ENCODE measurements at regions of chr1 and their contacts with region 1.

Region 1: DNA sequence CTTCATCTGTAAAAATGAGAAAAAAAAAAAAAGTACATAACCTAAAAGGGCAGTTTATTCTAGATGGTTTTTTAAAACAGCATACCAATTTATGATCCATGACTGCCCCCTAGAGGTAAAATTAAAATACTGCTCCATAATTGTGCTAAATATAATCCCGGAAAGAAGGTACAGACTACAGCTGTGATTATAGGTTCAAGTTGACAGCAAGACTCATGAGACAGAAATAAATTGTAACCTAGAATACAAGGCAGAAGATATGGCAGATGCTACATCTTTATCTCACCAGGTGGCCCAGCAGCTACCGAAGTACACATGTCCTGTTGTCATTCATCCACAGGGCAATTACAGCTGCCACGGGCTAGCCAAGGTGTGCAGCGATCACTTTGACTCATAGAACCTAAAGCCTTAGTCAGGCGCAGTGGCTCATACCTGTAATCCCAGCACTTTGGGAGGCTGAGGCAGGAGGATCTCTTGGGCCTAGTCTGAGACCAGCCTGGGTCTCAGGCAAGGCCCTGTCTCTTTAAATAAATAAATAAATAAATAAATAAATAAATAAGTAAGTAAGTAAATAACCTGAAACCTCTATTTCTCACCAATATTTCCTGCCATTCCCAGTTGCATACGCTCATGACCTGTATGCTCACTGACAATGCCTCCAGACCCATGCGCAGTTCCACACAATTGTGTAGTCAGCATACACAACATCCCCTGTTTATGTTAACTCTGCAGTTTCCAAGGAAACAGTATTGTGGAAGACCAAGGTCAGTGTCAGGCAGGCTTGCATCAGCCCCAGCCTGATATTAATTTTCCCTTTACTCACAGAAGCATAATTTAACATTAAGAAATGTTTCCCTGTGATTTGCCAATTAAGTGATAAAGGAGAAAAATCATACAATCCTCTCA is 18.3 kb upstream of the PPIE start:
- DNase-seq: no peak
- H3K4me3 Mint-ChIP-seq: no peak overlapping the region
- H3K27ac Mint-ChIP-seq: no peak overlapping the region
- H3K4me1 Mint-ChIP-seq: no peaks in the 10 kb centered on the region
- H3K27me3 Mint-ChIP-seq: peaks cover 55% of the 10 kb centered on the region

Region 2: GRCh38 chr1:39538588-39539465 is 181.5 kb before region 1 on chr1:
- intact Hi-C with region 1: no loop called
- DNase-seq: peak; percentile 24
- H3K4me3 Mint-ChIP-seq: no peak overlapping the region
- H3K27ac Mint-ChIP-seq: no peak overlapping the region
- H3K4me1 Mint-ChIP-seq: peaks cover 7% of the 10 kb centered on the region
- H3K27me3 Mint-ChIP-seq: no peaks in the 10 kb centered on the region

Region 3: DNA sequence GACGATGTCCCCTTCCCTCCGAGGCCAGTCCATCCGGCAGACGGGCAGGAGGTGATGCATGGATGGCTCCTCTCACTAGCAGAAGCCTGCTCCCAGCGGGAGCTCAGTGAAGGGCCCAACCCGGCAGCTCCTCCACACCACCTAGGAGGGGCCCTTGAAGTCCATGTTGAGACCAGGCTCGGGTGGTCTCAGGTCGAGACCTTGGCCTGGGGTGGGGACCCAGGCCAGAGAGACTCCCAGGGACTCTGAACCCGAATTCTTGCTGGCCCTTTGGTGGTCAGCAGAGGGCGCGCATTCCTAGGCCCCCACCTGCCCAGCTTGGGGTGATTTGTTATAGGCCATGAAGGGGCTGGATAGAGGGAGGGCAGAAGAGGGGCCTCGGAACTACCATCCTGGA is 47.8 kb before region 1 on chr1:
- intact Hi-C with region 1: loop called (anchors 1 kb)
- DNase-seq: no peak
- H3K4me3 Mint-ChIP-seq: peak overlapping the region; percentile 76
- H3K27ac Mint-ChIP-seq: no peak overlapping the region
- H3K4me1 Mint-ChIP-seq: peaks cover 21% of the 10 kb centered on the region
- H3K27me3 Mint-ChIP-seq: peaks cover 14% of the 10 kb centered on the region